GM10248 (cell line): ENCODE measurements at regions of chr6 and their contacts with region 1.

Region 1: GRCh38 chr6:127464881-127465459 is 5.8 kb upstream of the KIAA0408 start:
- DNase-seq: peak; percentile 55
- CTCF ChIP-seq: peak; percentile 86

Region 2: GRCh38 chr6:127201321-127201720 is 263.6 kb before region 1 on chr6:
- CTCF ChIA-PET with region 1: no interaction called
- POLR2A ChIA-PET with region 1: no interaction called
- DNase-seq: no peak
- CTCF ChIP-seq: no peak

Region 3: DNA sequence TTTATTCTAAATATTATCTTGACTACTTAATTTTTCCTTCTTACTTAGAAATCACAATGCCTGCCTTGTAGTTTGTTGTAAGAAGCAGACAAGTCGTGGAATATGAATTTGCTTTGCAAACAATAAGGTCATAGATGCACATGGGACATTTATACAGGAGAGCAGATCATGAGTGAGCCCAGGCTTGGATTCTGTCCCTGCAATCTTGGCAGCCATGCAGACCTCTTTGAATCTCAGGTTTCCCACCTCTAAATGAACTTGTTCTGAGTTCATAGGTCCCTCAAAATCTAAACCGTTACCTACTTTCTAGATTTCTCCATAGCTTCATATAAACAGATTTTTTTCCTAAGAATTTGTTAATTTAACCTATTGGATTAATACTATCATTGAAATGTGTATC is 25.3 kb before region 1 on chr6:
- CTCF ChIA-PET with region 1: no interaction called
- POLR2A ChIA-PET with region 1: no interaction called
- DNase-seq: no peak
- CTCF ChIP-seq: no peak

Region 4: DNA sequence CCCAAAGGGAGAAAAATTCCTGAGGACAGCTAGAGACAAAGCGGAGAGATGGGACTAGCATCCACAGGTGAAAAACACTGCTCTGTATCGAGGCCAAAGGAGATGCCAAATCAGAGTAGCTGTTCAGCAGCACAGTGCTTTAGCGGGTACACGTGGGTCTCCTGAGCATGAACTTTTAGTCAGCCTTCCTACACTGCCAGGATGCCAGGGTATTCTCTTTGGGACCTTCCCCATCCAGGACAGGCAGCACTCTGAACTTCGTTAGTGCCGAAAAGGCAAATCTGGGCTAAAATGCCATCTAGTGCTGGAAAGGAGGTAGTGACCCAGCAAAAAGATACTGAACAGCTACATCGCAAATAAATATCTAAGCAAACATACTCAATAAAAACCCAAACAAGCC is 176.9 kb after region 1 on chr6:
- CTCF ChIA-PET with region 1: interaction called, 10 read pairs
- POLR2A ChIA-PET with region 1: no interaction called
- DNase-seq: peak; percentile 17
- CTCF ChIP-seq: peak; percentile 67